HAP-1 (cell line): ENCODE measurements at regions of chr17 and their contacts with region 1.

Region 1: DNA sequence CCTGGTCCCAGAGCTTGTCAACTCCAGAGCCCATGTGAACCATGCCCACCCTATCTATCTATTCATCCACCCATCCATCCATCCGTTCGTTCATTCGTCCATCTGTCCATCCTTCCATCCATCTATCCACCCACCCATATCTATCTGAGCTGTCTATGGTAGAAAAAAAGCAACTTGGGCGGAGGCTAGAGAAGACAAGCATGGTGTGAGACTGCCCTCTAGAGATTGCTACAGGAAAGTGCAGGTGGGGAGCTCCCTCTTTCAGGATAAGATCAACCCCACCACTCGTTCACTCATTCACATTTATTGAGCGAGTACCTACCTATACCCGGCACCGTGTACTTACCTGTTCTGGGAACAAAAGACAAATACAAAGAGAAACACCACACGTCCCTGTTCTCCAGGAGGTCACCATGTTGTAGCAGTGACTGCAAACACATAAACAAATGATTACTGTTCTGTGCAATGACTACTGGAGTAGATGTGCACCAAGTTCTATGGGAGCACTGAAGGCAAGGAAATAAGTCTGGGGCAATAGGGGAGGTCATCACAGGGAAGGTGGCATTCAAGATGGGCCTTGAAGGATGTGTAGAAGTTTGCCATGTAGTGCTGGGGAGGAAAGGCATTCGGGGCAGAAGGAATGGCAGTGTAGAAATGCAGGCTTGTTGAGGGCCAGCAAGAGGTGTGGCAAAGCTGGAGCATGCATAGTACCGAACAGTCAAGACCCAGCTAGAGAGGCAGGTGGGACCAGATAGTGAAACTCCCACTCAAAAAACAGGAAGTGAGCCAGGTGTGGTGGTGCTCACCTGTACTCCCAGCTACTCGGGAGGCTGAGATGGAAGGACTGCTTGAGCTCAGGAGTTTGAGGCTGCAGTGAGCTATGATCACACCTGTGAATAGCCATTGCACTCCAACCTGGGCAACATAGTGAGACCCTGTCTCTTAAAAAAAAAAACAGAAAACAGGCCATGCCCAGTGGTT is 13.4 kb upstream of the ATP5MC1 start:
- DNase-seq: peak; percentile 71 to 78
- H3K4me3 ChIP-seq: no peak overlapping the region
- H3K4me1 ChIP-seq: no peaks in the 10 kb centered on the region
- H3K27me3 ChIP-seq: no peaks in the 10 kb centered on the region

Region 2: GRCh38 chr17:48804925-48805411 is 74.2 kb before region 1 on chr17:
- in situ Hi-C with region 1: loop called (anchors 5 kb)
- DNase-seq: peak; percentile 40 to 87
- H3K4me3 ChIP-seq: no peak overlapping the region
- H3K4me1 ChIP-seq: peaks cover 2% of the 10 kb centered on the region; the same call in 1 of the 2 replicates
- H3K27me3 ChIP-seq: 0 out of 2 replicates have a peak, but pooled peaks cover 3% of the 10 kb centered on the region

Region 3: DNA sequence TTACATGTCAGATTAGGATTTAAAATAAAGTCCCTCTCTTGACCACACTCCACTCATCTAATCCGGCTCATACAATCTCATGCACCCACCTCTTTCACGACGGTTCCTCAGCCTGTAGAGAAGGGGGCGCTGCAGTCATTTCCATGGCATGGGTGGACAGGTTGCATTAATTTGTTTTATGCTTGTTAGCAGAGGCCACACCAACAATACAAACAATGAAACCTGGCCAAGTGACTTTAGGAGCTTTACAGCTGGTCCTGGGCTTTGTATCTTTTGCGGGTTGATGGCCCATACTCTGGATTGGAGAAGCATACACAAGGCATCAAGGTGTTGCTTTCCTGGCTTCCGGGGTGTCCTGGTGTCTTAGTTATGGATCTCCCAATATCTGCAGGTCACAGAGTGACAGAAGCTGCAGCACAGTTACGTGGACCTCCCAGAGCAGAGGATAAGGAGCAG is 75.1 kb after region 1 on chr17:
- in situ Hi-C with region 1: no loop called
- DNase-seq: peak; percentile 41 to 75
- H3K4me3 ChIP-seq: no peak overlapping the region
- H3K4me1 ChIP-seq: no peaks in the 10 kb centered on the region; the same call in 1 of the 2 replicates
- H3K27me3 ChIP-seq: peaks cover 3% of the 10 kb centered on the region; the same call in 1 of the 2 replicates